CD8-positive, alpha-beta T cell (primary cell): ENCODE measurements at regions of chrX and their contacts with region 1.

Region 1: GRCh38 chrX:96424009-96424408 is 260.6 kb upstream of the DIAPH2 start:
- DNase-seq: no peak
- ATAC-seq: no peak
- H3K4me3 ChIP-seq: no peak overlapping the region
- H3K4me3 Mint-ChIP-seq: no peak overlapping the region
- H3K27ac ChIP-seq: no peak overlapping the region
- H3K27ac Mint-ChIP-seq: no peak overlapping the region
- H3K4me1 ChIP-seq: no peaks in the 10 kb centered on the region
- H3K4me1 Mint-ChIP-seq: no peaks in the 10 kb centered on the region
- H3K27me3 ChIP-seq: no peaks in the 10 kb centered on the region
- H3K27me3 Mint-ChIP-seq: no peaks in the 10 kb centered on the region
- CTCF ChIP-seq: no peak

Region 2: DNA sequence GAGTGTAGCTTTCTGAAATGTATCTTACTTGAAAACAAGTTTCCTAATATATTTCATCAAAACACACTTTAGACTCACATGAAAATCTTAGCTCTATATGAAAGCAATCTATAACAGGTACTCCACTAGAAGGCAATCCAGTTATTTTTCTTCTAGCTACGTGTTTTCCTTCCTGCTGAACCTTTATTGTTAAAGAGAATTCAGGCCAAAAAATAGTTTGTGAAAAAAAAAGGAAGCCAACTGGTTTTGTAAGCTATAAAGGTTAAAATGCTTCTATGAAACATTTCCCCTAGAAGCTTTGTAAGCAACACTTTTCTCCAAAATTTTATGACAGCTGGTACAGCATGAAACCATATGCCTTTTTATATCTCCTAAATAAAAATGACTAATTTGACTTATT is 44.1 kb before region 1 on chrX:
- CTCF ChIA-PET with region 1: no interaction called
- POLR2A ChIA-PET with region 1: no interaction called
- intact Hi-C with region 1: loop called in 1 of 2 experiments (anchors 2 kb)
- DNase-seq: no peak
- ATAC-seq: no peak
- H3K4me3 ChIP-seq: no peak overlapping the region
- H3K4me3 Mint-ChIP-seq: no peak overlapping the region
- H3K27ac ChIP-seq: no peak overlapping the region
- H3K27ac Mint-ChIP-seq: no peak overlapping the region
- H3K4me1 ChIP-seq: no peaks in the 10 kb centered on the region
- H3K4me1 Mint-ChIP-seq: no peaks in the 10 kb centered on the region
- H3K27me3 ChIP-seq: no peaks in the 10 kb centered on the region
- H3K27me3 Mint-ChIP-seq: no peaks in the 10 kb centered on the region
- CTCF ChIP-seq: no peak

Region 3: GRCh38 chrX:97551821-97552220 is 1127.8 kb after region 1 on chrX:
- CTCF ChIA-PET with region 1: no interaction called
- POLR2A ChIA-PET with region 1: no interaction called
- intact Hi-C with region 1: no loop called
- DNase-seq: no peak
- ATAC-seq: no peak
- H3K4me3 ChIP-seq: no peak overlapping the region
- H3K4me3 Mint-ChIP-seq: no peak overlapping the region
- H3K27ac ChIP-seq: no peak overlapping the region
- H3K27ac Mint-ChIP-seq: no peak overlapping the region
- H3K4me1 ChIP-seq: no peaks in the 10 kb centered on the region
- H3K4me1 Mint-ChIP-seq: no peaks in the 10 kb centered on the region
- H3K27me3 ChIP-seq: no peaks in the 10 kb centered on the region
- H3K27me3 Mint-ChIP-seq: no peaks in the 10 kb centered on the region
- CTCF ChIP-seq: no peak